Right ventricle myocardium superior (tissue), 1 donor: ENCODE measurements at regions of chr7 and their contacts with region 1.

Region 1: GRCh38 chr7:73811760-73812168 is 19.0 kb upstream of the CLDN4 start:
- DNase-seq: peak; percentile 67
- ATAC-seq: peak; percentile 81

Region 2: GRCh38 chr7:73851410-73852234 is 39.9 kb after region 1 on chr7:
- intact Hi-C with region 1: loop called (anchors 5 kb)
- DNase-seq: no peak
- ATAC-seq: peak; percentile 54